ENCODE measurements at regions of chr16 and their contacts with region 1.

Region 1: DNA sequence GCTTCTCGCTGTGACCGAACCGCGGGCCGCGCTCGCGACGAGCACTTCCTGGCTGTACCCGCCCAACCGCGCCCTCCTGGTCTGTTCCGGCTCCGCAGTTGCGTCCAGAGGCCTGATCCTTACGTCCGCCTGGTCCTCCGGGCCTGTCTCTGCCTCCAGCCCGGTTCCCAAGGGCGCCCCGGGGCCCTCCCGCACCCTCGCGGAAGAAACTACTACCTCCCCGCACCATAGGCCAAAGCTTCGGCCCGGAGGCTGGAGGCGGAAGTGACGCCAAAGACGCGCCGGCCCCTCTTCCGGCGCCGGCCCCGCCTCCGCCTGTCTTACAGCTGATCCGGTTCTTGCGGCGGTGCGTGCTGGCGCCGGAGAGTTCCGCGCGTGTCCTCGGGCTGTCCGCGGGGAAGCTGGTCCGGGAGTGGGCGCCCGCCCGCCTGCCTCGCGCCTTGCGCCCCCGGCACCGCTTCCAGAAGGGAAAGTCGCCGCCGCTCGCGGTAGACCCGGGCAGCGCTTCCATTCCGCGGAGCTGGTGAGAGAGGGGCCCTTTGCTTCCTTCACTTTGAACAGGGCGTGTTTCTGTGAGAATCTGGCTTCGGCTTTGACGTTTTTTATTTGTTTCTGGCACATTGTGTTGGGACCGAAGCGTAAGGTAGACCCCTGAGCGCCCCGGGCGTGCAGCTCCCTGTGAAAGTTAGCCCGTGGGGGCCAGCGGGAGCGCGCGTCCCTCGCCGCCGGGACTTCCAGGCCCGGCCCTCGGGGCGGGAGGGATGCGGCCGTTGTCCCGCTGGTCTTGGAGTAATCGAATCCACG is at the start of gene ZNF778:
- DNase-seq: peak; percentile 92
- total RNA-seq, gene ZNF778: 9.7 TPM

Region 2: DNA sequence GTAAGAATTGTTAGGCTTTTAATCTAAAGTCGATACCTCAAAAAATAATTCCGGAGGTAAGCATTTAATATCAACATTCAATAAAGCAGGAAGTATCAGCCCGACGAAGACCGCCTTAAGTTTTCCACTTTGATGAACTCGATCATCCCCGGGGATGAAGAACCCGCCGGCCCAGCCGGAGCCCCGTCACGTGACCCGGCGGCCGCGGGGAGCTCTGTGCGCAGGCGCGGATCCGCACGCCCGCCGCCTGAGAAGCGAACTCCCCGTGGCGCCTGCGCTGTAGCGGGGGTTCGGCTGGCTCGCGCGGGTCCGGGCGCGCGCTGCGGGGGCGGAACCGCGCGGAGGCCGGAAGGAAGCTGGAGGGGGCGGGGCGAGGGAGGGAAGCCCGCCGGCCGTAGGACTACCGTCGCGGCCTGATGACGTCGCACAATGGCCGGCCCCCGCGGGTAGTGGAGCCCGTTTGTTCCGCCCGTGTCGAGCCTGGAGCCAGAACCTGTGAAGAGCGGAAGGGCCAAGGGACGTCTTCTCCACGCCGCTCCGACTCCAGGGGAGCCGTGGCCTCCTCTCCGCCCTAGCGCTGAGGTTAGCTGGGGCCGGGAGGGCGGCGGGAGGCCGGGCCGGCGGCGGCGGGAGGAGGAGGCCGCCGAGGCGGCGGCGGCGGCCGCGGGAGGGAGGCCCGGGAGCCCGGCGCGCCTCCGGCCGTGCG is 647.5 kb before region 1 on chr16 and contains the start of gene ZC3H18:
- intact Hi-C with region 1: loop called (anchors 5 kb)
- DNase-seq: peak; percentile 98
- total RNA-seq, gene ZC3H18: 20.6 TPM

Region 3: GRCh38 chr16:88743693-88744576 is 473.7 kb before region 1 on chr16:
- intact Hi-C with region 1: loop called (anchors 5 kb)
- DNase-seq: peak; percentile 88

Region 4: GRCh38 chr16:88811769-88812512 is 405.6 kb before region 1 on chr16 and contains the start of gene APRT:
- intact Hi-C with region 1: loop called (anchors 5 kb)
- DNase-seq: peak; percentile 98
- total RNA-seq, gene APRT: 46.6 TPM

Region 5: DNA sequence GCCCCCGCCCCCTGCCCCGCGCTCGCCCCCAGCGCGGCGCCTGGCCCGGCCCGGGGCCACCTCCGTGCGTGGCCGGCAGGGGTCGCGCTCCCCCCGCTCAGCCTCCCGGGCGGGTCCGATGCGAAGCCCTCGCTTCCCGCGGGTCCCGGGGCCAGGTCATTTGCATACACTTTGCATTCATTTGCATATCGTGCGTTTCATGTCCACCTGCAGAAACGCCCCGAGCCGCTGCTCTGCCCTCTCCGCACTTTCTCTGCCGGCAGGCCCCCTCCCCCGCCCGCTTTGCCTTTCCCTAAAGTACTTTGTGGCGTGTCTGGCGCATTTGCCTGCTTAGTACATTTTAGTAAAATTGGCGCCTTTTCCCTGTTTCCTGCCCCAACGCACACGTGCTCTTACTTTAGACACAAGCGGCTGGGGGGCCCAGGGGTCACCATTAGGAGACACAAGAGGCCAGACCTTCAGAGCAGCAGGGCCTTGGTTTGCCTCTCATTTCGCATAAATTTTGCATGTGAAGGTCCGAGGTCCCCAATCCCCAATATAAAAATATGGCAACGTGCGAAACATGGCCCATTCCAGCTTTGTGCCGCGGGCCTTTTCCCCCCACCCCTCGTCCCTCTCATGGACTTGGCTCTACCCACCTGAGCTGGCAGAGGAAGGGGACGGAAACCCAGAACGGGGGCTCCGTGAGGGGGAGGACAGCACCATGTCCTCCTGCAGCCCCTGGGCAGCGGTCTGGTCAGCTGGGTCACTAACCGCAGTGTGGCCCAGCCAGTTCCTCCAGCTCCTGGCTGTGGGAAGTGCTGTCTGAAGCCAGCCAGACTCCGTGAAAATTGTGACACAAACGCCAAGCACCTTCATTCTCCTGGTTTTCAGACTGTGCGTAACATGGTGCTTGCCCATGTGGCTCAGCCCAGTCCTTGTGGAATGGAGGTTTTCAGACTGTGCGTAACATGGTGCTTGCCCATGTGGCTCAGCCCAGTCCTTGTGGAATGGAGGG is 275.4 kb before region 1 on chr16:
- intact Hi-C with region 1: loop called (anchors 2 kb)
- DNase-seq: peak; percentile 89

Region 6: GRCh38 chr16:89093602-89094251 is 123.9 kb before region 1 on chr16 and contains the start of gene ACSF3:
- intact Hi-C with region 1: loop called (anchors 10 kb)
- DNase-seq: peak; percentile 80
- total RNA-seq, gene ACSF3: 14.7 TPM

Measured in cardiac septum (tissue), 1 donor.